Motor neuron (in vitro differentiated cells): ENCODE measurements at regions of chr11 and their contacts with region 1.

Region 1: GRCh38 chr11:114563077-114563476 is 3.4 kb upstream of the NXPE1 start:
- ATAC-seq: peak in 2 of 8 experiments; percentile 43 to 55
- H3K4me3 ChIP-seq: no peak overlapping the region
- H3K27ac ChIP-seq: no peak overlapping the region
- H3K4me1 ChIP-seq: peaks cover 0 to 2% of the 10 kb centered on the region in 2 donors

Region 2: DNA sequence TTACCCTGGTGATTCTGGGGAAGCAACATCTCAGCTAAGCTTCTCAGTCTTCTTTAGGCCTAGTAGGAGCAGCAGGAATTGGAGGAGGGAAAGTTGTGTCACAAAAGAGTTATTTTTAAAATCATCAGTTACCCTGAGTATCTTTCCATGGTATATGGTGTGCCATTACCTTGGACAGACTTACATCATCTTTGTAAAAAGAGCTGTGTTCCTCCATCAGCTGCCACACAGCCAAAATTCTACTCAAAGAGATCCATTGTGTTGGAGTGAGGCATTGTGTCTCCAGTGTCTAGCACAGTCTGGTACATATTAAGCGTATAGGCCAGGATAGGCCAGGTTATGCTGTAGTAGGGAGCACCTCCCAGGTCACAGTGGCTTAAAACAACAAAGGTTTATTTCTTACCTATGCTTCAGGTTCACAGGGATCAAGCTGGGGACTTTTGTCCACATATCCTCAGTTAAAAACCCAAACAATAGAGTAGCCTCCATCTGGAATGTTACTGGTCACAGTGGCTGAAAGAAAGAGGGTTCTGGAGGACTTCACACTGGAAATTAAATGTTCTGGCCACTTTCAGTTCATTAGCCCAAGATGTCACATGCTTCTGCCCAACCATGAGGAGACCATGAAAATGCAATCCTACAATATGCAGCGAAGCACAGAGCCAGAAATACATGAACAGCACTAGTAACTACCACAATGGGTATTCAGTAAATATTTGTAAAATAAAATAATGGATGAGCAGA is 847.0 kb before region 1 on chr11:
- in situ Hi-C with region 1: no loop called
- ATAC-seq: no peak
- H3K4me3 ChIP-seq: no peak overlapping the region
- H3K27ac ChIP-seq: no peak overlapping the region
- H3K4me1 ChIP-seq: no peaks in the 10 kb centered on the region

Region 3: DNA sequence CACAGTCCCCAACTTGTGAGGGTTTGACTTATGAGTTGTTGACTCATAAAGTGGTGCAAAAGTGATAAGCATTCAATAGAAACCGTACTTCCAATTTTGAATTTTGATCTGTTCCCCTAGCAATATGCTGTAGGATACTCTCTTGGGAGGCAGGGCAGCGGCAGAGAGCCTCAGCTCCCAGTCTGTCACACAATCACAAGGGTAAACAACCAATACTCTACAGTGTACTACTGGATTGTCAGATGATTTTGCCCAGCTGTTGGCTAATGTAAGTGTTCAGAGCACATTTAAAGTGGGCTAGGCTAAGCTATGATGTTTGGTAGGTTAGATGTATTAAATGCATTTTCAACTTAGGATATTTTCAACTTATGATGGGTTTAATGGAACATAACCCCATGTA is 101.6 kb after region 1 on chr11:
- in situ Hi-C with region 1: loop called in 3 of 9 experiments (anchors 25 kb)
- ATAC-seq: no peak
- H3K4me3 ChIP-seq: no peak overlapping the region
- H3K27ac ChIP-seq: no peak overlapping the region
- H3K4me1 ChIP-seq: no peaks in the 10 kb centered on the region

Region 4: GRCh38 chr11:115017529-115017928 is 454.5 kb after region 1 on chr11:
- in situ Hi-C with region 1: no loop called
- ATAC-seq: no peak
- H3K4me3 ChIP-seq: no peak overlapping the region
- H3K27ac ChIP-seq: no peak overlapping the region
- H3K4me1 ChIP-seq: no peaks in the 10 kb centered on the region

Region 5: DNA sequence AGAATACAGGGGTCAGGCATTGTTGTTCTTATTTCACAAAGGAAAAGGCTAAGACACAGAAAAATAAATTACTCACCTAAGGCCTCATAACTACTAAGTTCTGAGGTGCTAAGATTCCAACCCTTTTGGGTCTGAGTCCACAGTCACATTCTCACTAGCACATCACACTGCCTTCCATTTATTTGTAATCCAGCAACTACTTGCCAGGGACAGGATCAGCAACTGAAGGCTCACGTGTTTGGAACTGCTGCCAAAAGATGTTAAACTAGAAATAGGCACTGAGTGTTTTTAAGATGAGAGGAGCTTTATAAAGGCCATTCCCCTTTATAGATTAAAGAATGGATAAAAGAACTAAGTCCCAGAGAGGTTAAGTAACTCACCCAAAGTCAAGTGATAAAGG is 883.1 kb after region 1 on chr11:
- in situ Hi-C with region 1: no loop called
- ATAC-seq: no peak
- H3K4me3 ChIP-seq: no peak overlapping the region
- H3K27ac ChIP-seq: no peak overlapping the region
- H3K4me1 ChIP-seq: peaks cover 0 to 8% of the 10 kb centered on the region in 2 donors